ENCODE measurements at regions of chr14 and their contacts with region 1.

Region 1: DNA sequence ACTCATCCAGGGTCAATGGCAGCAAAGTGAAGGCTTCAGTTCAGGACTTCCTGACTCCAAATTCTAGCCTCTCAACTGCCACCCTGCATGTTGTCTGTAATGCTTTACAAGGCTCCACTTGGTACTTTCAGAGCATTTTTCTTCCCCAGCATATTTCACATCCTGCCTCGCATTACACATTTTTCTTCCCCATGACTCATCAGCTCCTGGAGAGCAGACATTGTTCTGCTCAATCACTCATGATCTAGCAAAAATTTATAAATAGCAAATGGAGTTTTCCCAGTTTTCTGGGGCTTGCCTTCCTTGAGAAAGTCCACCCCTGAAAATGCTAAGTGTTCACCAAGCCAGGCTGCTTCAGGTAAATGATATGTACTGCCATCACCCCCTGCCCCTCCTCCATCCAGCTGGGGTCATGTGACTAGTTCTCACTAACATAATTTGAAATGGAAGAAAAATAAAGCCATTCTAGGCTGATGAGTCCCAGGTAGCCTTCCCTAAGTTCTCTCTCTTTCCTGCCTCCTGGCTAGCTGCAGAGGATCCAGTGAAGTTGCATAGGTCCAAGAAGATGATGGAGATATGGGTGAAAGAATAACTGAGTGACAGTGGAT is 69.4 kb downstream of the ARMH4 start:
- DNase-seq: no peak
- ATAC-seq: no peak
- H3K4me3 ChIP-seq: no peak overlapping the region
- H3K27ac ChIP-seq: no peak overlapping the region
- H3K4me1 ChIP-seq: no peaks in the 10 kb centered on the region
- H3K27me3 ChIP-seq: no peaks in the 10 kb centered on the region
- CTCF ChIP-seq: no peak
- EP300 ChIP-seq: no peak
- POLR2A ChIP-seq: no peak
- RAD21 ChIP-seq: no peak

Region 2: DNA sequence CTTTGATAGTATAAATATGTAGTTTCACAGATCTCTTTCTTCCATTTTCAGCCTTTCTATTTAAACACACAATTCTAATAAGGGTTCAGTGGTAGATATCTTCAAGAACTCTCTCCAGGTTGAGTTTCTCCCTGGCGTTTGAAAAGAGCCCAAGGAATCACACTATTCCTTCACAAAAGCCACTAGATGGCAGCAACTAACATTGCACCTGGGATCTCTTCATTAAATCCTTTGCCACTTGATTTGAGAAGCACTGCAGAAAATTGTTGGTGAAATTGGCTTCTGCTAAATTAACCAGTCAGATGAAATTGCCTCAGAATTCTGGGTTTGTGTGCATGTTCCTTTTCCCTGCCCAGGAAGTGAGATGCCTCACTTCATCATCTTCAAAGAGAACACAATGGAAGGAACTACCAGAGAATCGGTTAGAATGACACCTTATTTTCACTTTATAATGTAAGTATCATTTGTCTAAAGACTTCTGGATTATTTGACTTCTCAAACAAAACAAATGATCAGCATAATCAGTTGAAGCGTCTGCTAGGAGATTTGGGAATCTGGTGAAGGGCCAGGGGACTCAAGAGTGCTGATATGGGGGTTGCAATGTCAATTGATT is 595.7 kb before region 1 on chr14:
- CTCF ChIA-PET with region 1: no interaction called
- POLR2A ChIA-PET with region 1: no interaction called
- in situ Hi-C with region 1: loop called (anchors 10 kb)
- intact Hi-C with region 1: no loop called
- DNase-seq: peak; percentile 41
- ATAC-seq: peak; percentile 68
- H3K4me3 ChIP-seq: no peak overlapping the region
- H3K27ac ChIP-seq: no peak overlapping the region
- H3K4me1 ChIP-seq: no peaks in the 10 kb centered on the region
- H3K27me3 ChIP-seq: no peaks in the 10 kb centered on the region
- CTCF ChIP-seq: peak; percentile 70
- EP300 ChIP-seq: no peak
- POLR2A ChIP-seq: no peak
- RAD21 ChIP-seq: 0 out of 2 replicates have a peak, but pooled peaks have one; percentile 17

Measured in HepG2 (cell line).